IMR-90 (cell line): ENCODE measurements at regions of chr21 and their contacts with region 1.

Region 1: GRCh38 chr21:33451634-33452071 is 28.1 kb downstream of the TMEM50B start:
- DNase-seq: peak; percentile 33
- ATAC-seq: peak; percentile 71
- H3K4me3 ChIP-seq: no peak overlapping the region
- H3K27ac ChIP-seq: no peak overlapping the region
- H3K4me1 ChIP-seq: peaks cover 3% of the 10 kb centered on the region
- H3K27me3 ChIP-seq: no peaks in the 10 kb centered on the region
- CTCF ChIP-seq: no peak
- POLR2A ChIP-seq: no peak
- RAD21 ChIP-seq: no peak

Region 2: GRCh38 chr21:32834916-32835235 is 616.8 kb before region 1 on chr21:
- CTCF ChIA-PET with region 1: no interaction called
- POLR2A ChIA-PET with region 1: no interaction called
- dilution Hi-C with region 1: no loop called
- in situ Hi-C with region 1: loop called (anchors 25 kb)
- intact Hi-C with region 1: loop called (anchors 5 kb)
- DNase-seq: no peak
- ATAC-seq: no peak
- H3K4me3 ChIP-seq: no peak overlapping the region
- H3K27ac ChIP-seq: no peak overlapping the region
- H3K4me1 ChIP-seq: no peaks in the 10 kb centered on the region
- H3K27me3 ChIP-seq: peaks cover 22% of the 10 kb centered on the region
- CTCF ChIP-seq: no peak
- POLR2A ChIP-seq: no peak
- RAD21 ChIP-seq: no peak

Region 3: GRCh38 chr21:32994305-32994704 is 457.3 kb before region 1 on chr21:
- CTCF ChIA-PET with region 1: no interaction called
- POLR2A ChIA-PET with region 1: no interaction called
- dilution Hi-C with region 1: no loop called
- in situ Hi-C with region 1: loop called (anchors 25 kb)
- intact Hi-C with region 1: no loop called
- DNase-seq: peak; percentile 31
- ATAC-seq: peak; percentile 77
- H3K4me3 ChIP-seq: no peak overlapping the region
- H3K27ac ChIP-seq: no peak overlapping the region
- H3K4me1 ChIP-seq: no peaks in the 10 kb centered on the region
- H3K27me3 ChIP-seq: peaks cover 26% of the 10 kb centered on the region
- CTCF ChIP-seq: peak; percentile 63
- POLR2A ChIP-seq: no peak
- RAD21 ChIP-seq: peak; percentile 69

Region 4: GRCh38 chr21:33470701-33471100 is 19.0 kb after region 1 on chr21:
- CTCF ChIA-PET with region 1: no interaction called
- POLR2A ChIA-PET with region 1: no interaction called
- dilution Hi-C with region 1: no loop called
- in situ Hi-C with region 1: no loop called
- intact Hi-C with region 1: no loop called
- DNase-seq: no peak
- ATAC-seq: no peak
- H3K4me3 ChIP-seq: no peak overlapping the region
- H3K27ac ChIP-seq: no peak overlapping the region
- H3K4me1 ChIP-seq: no peaks in the 10 kb centered on the region
- H3K27me3 ChIP-seq: no peaks in the 10 kb centered on the region
- CTCF ChIP-seq: no peak
- POLR2A ChIP-seq: no peak
- RAD21 ChIP-seq: no peak